GM10248 (cell line): ENCODE measurements at regions of chr11 and their contacts with region 1.

Region 1: GRCh38 chr11:113385749-113386148 is 1.8 kb upstream of the ANKK1 start:
- DNase-seq: no peak
- CTCF ChIP-seq: no peak

Region 2: DNA sequence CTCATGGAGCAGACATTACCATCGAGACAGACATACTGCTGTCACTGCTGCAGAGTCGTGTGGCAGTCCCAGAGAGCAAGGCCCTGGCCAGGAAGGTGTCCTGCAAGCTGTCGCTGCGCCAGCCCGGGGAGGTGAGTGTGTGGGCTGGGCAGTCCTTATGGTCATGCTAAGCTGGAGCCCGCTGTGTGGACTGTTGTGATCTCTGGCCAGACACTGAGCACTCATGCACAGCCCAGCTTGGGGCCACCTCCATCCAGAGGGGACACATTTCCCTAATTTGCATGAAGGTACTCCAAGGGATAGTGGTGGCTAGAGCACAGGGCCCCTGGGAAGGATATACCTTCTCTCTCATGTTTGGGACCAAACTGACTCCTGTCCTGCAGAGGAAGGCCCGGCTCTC is 11.5 kb after region 1 on chr11:
- CTCF ChIA-PET with region 1: interaction called, 11 read pairs
- POLR2A ChIA-PET with region 1: no interaction called
- DNase-seq: no peak
- CTCF ChIP-seq: no peak

Region 3: GRCh38 chr11:113839842-113840241 is 454.1 kb after region 1 on chr11:
- CTCF ChIA-PET with region 1: no interaction called
- POLR2A ChIA-PET with region 1: no interaction called
- DNase-seq: peak; percentile 64
- CTCF ChIP-seq: no peak